Calu3 (cell line): ENCODE measurements at regions of chr2 and their contacts with region 1.

Region 1: DNA sequence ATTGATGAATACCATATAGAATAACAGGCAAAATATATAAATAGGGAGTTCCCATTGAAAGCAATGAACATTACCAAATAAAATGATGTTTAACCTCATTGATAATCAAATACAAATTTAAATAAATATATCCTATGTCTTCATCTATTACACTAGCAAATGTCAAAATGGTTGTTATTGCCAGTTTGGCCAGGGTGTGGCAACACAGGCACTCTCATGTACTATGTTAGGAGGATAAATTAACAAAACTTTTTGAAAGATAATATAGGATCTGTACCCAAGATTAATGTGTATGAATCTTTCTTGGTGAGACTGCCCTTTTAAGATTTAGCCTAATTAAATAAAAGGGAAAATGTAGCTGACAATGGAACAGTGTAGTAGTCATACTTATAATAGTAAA is 659.3 kb downstream of the ERBB4 start:
- DNase-seq: peak; percentile 4
- H3K4me3 Mint-ChIP-seq: no peak overlapping the region
- H3K27ac Mint-ChIP-seq: no peak overlapping the region
- H3K4me1 Mint-ChIP-seq: no peaks in the 10 kb centered on the region
- H3K27me3 Mint-ChIP-seq: no peaks in the 10 kb centered on the region
- CTCF ChIP-seq: no peak

Region 2: DNA sequence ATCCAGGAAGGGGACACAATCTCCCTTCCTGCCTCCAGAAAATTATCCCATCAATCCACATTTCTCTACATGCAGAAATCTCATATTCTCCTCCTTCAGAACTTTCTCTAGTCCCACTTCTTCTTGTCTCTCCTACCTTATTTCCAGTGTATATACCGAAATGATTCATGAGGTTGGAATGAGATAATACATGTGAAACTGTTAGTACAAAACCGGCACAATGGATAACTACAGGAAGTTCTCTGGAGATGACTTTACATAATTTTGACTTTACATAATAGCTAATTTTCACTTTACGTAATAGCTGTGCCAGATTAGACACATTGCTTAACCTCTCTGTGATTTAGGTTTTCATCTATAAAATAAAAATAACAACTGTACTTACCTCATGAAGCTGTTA is 142.0 kb before region 1 on chr2:
- CTCF ChIA-PET with region 1: no interaction called
- intact Hi-C with region 1: no loop called
- DNase-seq: no peak
- H3K4me3 Mint-ChIP-seq: no peak overlapping the region
- H3K27ac Mint-ChIP-seq: peak overlapping the region; percentile 8
- H3K4me1 Mint-ChIP-seq: no peaks in the 10 kb centered on the region
- H3K27me3 Mint-ChIP-seq: no peaks in the 10 kb centered on the region
- CTCF ChIP-seq: no peak

Region 3: DNA sequence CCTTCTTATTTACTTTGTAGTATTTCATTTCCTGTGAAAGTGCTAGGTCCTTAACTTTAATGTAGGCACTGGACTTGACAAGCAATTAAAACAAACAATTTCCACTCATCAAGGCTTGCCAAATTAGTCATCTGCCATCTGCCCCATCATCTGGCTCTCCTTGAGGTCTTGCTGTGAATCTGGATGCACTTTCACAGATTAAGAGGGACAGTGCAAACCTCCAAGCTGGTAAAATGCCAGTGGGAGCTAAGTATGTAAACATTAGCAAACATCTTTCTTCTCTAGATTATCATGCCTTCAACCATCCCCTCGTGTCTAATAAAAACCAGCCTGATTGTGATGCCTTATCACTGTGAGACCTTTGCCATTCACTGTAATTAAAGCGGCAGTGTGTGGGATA is 256.4 kb after region 1 on chr2:
- CTCF ChIA-PET with region 1: no interaction called
- intact Hi-C with region 1: loop called (anchors 10 kb)
- DNase-seq: no peak
- H3K4me3 Mint-ChIP-seq: no peak overlapping the region
- H3K27ac Mint-ChIP-seq: no peak overlapping the region
- H3K4me1 Mint-ChIP-seq: no peaks in the 10 kb centered on the region
- H3K27me3 Mint-ChIP-seq: no peaks in the 10 kb centered on the region
- CTCF ChIP-seq: no peak

Region 4: DNA sequence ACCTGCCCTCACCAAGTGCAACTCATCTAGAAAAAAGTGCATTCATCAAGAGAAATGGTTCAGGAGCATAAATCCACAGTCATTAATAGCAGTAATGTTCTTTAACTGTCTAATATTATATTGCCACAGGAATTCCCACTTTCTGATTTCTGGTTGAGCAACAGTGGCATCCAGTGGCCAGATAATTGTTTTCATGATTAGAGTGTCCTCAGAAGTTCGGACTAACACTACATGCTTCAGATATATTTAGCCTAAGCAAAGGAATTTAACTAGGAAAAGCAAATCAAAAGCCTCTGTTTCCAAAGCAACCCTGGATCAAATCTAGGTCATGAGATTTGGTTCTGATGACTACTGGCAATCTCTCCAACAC is 669.1 kb after region 1 on chr2:
- CTCF ChIA-PET with region 1: interaction called, 4 read pairs
- intact Hi-C with region 1: loop called (anchors 5 kb)
- DNase-seq: peak; percentile 39
- H3K4me3 Mint-ChIP-seq: no peak overlapping the region
- H3K27ac Mint-ChIP-seq: no peak overlapping the region
- H3K4me1 Mint-ChIP-seq: no peaks in the 10 kb centered on the region
- H3K27me3 Mint-ChIP-seq: no peaks in the 10 kb centered on the region
- CTCF ChIP-seq: peak; percentile 37